ENCODE measurements at regions of chr12 and their contacts with region 1.

Region 1: DNA sequence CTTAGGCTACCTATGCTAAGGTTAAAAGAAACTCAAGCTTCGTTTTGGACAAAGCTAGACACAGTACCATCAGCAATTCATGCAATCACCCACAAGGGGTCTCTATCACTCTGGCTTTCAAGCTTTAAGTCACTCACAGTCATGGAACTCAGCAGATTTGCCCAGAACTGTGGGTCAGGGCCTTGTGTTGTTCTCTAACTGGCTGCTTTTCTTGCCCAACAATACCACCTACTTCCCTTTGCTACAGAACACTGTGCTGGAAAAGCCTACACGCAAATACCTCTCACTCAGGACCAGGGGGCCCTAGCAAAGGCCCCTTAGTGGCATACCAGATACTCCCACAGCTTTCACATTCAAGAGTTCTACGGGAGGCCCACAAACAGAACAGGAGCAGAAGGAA is 9.1 kb downstream of the NEMP1 start:
- DNase-seq: peak in 30 of 35 experiments; percentile 30 to 88 (median 55)
- ATAC-seq: peak; percentile 98 to 100 (median 99)
- H3K4me3 ChIP-seq: no peak overlapping the region
- H3K4me3 Mint-ChIP-seq: peak overlapping the region in 1 of 3 donors; percentile 6
- H3K27ac ChIP-seq: peak overlapping the region; percentile 54
- H3K27ac Mint-ChIP-seq: peak overlapping the region; percentile 85 to 92
- H3K4me1 ChIP-seq: peaks cover 5 to 12% of the 10 kb centered on the region in 2 experiments
- H3K4me1 Mint-ChIP-seq: peaks cover 17 to 31% (median 26%) of the 10 kb centered on the region in 3 donors
- H3K27me3 ChIP-seq: no peaks in the 10 kb centered on the region
- H3K27me3 Mint-ChIP-seq: no peaks in the 10 kb centered on the region

Region 2: GRCh38 chr12:57182921-57183790 is 113.6 kb after region 1 on chr12:
- CTCF ChIA-PET with region 1: interaction called in 1 of 2 experiments, 25 read pairs
- POLR2A ChIA-PET with region 1: no interaction called
- DNase-seq: peak; percentile 47 to 87 (median 74)
- ATAC-seq: peak; percentile 96 to 99 (median 98)
- H3K4me3 ChIP-seq: no peak overlapping the region
- H3K4me3 Mint-ChIP-seq: no peak overlapping the region
- H3K27ac ChIP-seq: no peak overlapping the region
- H3K27ac Mint-ChIP-seq: no peak overlapping the region
- H3K4me1 ChIP-seq: peaks cover 0 to 6% of the 10 kb centered on the region in 2 experiments
- H3K4me1 Mint-ChIP-seq: peaks cover 0 to 4% (median 2%) of the 10 kb centered on the region in 3 donors
- H3K27me3 ChIP-seq: peaks cover 0 to 3% of the 10 kb centered on the region in 2 experiments
- H3K27me3 Mint-ChIP-seq: no peaks in the 10 kb centered on the region